ENCODE measurements at regions of chr5 and their contacts with region 1.

Region 1: GRCh38 chr5:116068028-116068632 is 16.7 kb upstream of the COMMD10 start:
- DNase-seq: peak; percentile 70
- H3K4me3 Mint-ChIP-seq: no peak overlapping the region
- H3K27ac Mint-ChIP-seq: no peak overlapping the region
- H3K4me1 Mint-ChIP-seq: no peaks in the 10 kb centered on the region
- H3K27me3 Mint-ChIP-seq: peaks cover 24% of the 10 kb centered on the region
- CTCF ChIP-seq: peak; percentile 69

Region 2: GRCh38 chr5:115625579-115626444 is 442.3 kb before region 1 on chr5 and contains the start of gene TMED7:
- CTCF ChIA-PET with region 1: interaction called, 10 read pairs
- POLR2A ChIA-PET with region 1: no interaction called
- intact Hi-C with region 1: no loop called
- DNase-seq: peak; percentile 98
- H3K4me3 Mint-ChIP-seq: no peak within 1 kb of the TSS
- H3K27ac Mint-ChIP-seq: no peak within 1 kb of the TSS
- H3K4me1 Mint-ChIP-seq: peaks cover 5% of the 10 kb centered on the region
- H3K27me3 Mint-ChIP-seq: no peaks in the 10 kb centered on the region
- CTCF ChIP-seq: no peak
- total RNA-seq, gene TMED7: 96.1 and 115 TPM in 2 replicates

Region 3: DNA sequence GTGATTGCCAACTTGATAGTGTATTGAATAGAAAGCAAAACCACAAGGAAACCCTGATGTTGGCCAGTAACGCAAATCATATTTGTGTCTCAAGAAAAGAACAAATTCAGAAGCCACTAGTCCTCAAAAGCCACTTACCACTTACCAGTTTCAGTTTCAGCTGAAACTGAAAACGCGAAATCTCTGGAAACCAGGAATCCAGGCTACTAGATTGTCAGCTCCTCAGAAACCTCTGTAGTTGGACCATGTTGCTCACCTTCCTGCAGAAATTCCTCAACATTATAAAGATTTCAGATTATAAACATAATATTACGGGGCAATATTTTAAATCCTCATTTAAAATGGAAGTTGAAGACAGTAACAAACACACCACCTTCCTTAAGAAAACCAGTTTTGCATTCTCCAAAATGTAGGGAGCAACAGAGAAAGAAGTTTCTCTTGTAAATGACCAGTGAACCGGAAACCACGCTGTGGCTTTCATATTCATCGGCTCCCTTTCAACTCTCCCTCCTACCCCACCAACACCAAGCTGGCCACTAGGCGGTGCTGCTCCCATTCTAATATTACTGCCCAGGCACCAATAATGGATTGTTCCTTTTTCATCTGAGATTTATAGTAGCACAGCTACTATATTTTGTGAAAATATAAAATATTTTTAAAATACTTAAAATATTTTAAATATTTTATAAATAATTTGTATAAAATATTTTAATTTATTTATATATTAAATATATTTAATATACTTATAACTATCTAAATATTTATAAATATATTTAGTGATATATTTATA is 433.6 kb before region 1 on chr5:
- CTCF ChIA-PET with region 1: interaction called, 10 read pairs
- POLR2A ChIA-PET with region 1: interaction called, 3 read pairs
- intact Hi-C with region 1: loop called (anchors 1 kb)
- DNase-seq: peak; percentile 86
- H3K4me3 Mint-ChIP-seq: peak overlapping the region; percentile 56
- H3K27ac Mint-ChIP-seq: no peak overlapping the region
- H3K4me1 Mint-ChIP-seq: peaks cover 4% of the 10 kb centered on the region
- H3K27me3 Mint-ChIP-seq: no peaks in the 10 kb centered on the region
- CTCF ChIP-seq: peak; percentile 81

Region 4: DNA sequence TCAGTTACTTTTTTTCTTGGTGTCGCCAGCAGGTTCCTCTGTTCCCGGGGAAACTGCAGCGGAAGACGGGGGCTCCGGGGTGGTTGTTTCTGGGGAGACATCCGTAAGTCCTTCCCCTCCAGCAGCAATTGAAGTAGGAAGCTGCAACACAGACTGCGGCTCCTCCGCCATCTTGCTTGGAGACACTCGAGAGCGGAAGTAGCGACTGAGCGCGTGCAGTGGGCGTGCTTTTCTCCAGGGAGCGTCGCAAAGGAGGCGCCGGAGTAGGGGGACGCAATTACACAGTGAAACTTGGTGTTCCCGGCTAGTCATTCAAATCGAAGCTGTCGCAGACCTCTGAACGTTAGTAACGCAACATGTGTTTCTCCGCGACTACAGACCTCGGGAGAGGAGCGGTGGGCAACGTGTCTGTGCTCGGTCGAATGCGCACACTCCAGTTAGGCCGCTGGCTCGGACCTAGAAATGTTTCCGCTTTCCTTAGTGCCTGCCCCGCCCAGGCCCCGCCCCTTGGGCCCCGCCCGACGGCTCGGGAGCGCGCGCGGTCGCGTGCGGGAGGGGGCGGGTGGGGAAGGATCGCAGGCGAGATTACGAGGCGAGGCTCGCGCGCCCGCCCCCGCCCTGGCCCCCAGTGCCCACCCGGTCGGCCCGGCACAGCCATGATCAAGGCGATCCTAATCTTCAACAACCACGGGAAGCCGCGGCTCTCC is 226.6 kb before region 1 on chr5 and contains the starts of genes AP3S1 and ATG12:
- CTCF ChIA-PET with region 1: interaction called, 22 read pairs
- POLR2A ChIA-PET with region 1: interaction called, 5 read pairs
- intact Hi-C with region 1: loop called (anchors 1 kb)
- DNase-seq: peak; percentile 94
- H3K4me3 Mint-ChIP-seq: peak within 1 kb of the TSS; percentile 77
- H3K27ac Mint-ChIP-seq: peak within 1 kb of the TSS; percentile 97
- H3K4me1 Mint-ChIP-seq: peaks cover 25% of the 10 kb centered on the region
- H3K27me3 Mint-ChIP-seq: no peaks in the 10 kb centered on the region
- CTCF ChIP-seq: no peak
- total RNA-seq, gene AP3S1: 94.6 and 102 TPM in 2 replicates
- total RNA-seq, gene ATG12: 42.6 and 46.3 TPM in 2 replicates

Region 5: GRCh38 chr5:115888027-115888426 is 180.1 kb before region 1 on chr5:
- CTCF ChIA-PET with region 1: interaction called, 8 read pairs
- POLR2A ChIA-PET with region 1: no interaction called
- intact Hi-C with region 1: loop called (anchors 1 kb)
- DNase-seq: peak; percentile 27
- H3K4me3 Mint-ChIP-seq: no peak overlapping the region
- H3K27ac Mint-ChIP-seq: no peak overlapping the region
- H3K4me1 Mint-ChIP-seq: no peaks in the 10 kb centered on the region
- H3K27me3 Mint-ChIP-seq: no peaks in the 10 kb centered on the region
- CTCF ChIP-seq: peak; percentile 16

Region 6: DNA sequence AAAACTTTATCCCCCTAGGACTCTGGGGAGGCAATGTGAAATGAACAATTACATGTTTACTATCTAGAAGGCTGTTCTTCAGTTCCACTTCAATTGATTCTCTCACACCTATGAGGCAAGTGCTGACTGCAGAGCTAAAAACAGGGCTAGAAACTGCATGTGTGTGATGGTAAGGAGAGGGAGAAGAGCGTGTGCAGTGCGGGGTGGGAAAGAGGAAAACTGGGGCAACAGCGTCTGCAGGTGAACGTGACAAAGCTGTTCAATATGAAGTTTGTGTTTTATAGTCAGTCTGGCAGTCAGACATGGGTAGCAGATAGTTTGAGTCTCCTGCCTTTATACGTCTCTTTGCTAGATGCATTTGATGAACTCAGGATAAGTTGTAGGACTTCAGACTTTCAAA is 10.1 kb after region 1 on chr5:
- CTCF ChIA-PET with region 1: interaction called, 25 read pairs
- POLR2A ChIA-PET with region 1: no interaction called
- intact Hi-C with region 1: no loop called
- DNase-seq: no peak
- H3K4me3 Mint-ChIP-seq: no peak overlapping the region
- H3K27ac Mint-ChIP-seq: no peak overlapping the region
- H3K4me1 Mint-ChIP-seq: no peaks in the 10 kb centered on the region
- H3K27me3 Mint-ChIP-seq: no peaks in the 10 kb centered on the region
- CTCF ChIP-seq: no peak